K562 (cell line): ENCODE measurements at regions of chr17 and their contacts with region 1.

Region 1: GRCh38 chr17:49496183-49496866 is 1.2 kb downstream of the NGFR start:
- DNase-seq: peak; percentile 76 to 83 (median 80)
- ATAC-seq: peak; percentile 94
- H3K4me3 ChIP-seq: no peak overlapping the region
- H3K27ac ChIP-seq: no peak overlapping the region
- H3K4me1 ChIP-seq: peaks cover 0 to 31% of the 10 kb centered on the region in 2 experiments; a peak in 2 of 5 replicates
- H3K27me3 ChIP-seq: peaks cover 30 to 62% of the 10 kb centered on the region in 2 experiments
- CTCF ChIP-seq: peak; percentile 65 to 81 (median 67); a peak in 5 of 6 replicates
- EP300 ChIP-seq: no peak
- POLR2A ChIP-seq: no peak
- RAD21 ChIP-seq: peak; percentile 25 to 63; a peak in 3 of 4 replicates

Region 2: DNA sequence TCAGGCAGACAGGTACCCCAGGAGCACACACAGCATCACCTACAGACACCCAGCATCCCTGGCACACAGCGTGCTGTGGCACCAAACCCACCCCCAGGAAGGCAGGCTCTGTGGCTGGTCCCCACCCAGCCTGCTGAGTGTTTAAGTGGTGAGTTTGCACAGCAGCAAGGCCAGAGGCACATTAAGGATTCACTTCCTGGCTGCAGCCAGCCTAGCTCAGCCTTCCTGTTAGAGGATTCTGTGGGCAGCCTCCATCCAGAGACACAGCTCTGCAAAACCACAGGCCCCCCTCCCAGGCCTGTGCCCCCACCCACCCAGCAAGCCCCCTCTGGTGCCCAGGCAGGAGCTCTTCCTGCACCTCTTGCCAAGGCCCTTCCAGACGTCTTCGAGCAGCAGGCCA is 45.6 kb before region 1 on chr17:
- CTCF ChIA-PET with region 1: no interaction called
- POLR2A ChIA-PET with region 1: no interaction called
- in situ Hi-C with region 1: no loop called
- intact Hi-C with region 1: no loop called
- DNase-seq: no peak
- ATAC-seq: no peak
- H3K4me3 ChIP-seq: no peak overlapping the region
- H3K27ac ChIP-seq: no peak overlapping the region
- H3K4me1 ChIP-seq: peaks cover 4 to 5% of the 10 kb centered on the region in 2 experiments; a peak in 3 of 5 replicates
- H3K27me3 ChIP-seq: peaks cover 22 to 39% of the 10 kb centered on the region in 2 experiments; a peak in 4 of 5 replicates
- CTCF ChIP-seq: no peak
- EP300 ChIP-seq: no peak
- POLR2A ChIP-seq: no peak
- RAD21 ChIP-seq: no peak

Region 3: GRCh38 chr17:49461580-49461979 is 34.7 kb before region 1 on chr17:
- CTCF ChIA-PET with region 1: no interaction called
- POLR2A ChIA-PET with region 1: no interaction called
- in situ Hi-C with region 1: no loop called
- intact Hi-C with region 1: loop called (anchors 5 kb)
- DNase-seq: no peak
- ATAC-seq: no peak
- H3K4me3 ChIP-seq: no peak overlapping the region
- H3K27ac ChIP-seq: no peak overlapping the region
- H3K4me1 ChIP-seq: no peaks in the 10 kb centered on the region
- H3K27me3 ChIP-seq: peaks cover 37 to 75% of the 10 kb centered on the region in 2 experiments
- CTCF ChIP-seq: no peak
- EP300 ChIP-seq: no peak
- POLR2A ChIP-seq: no peak
- RAD21 ChIP-seq: no peak